ENCODE measurements at regions of chr7 and their contacts with region 1.

Region 1: GRCh38 chr7:121547544-121548092 is 151.5 kb upstream of the FAM3C start:
- DNase-seq: peak; percentile 76
- ATAC-seq: peak; percentile 47
- H3K4me3 ChIP-seq: no peak overlapping the region
- H3K27ac ChIP-seq: no peak overlapping the region
- H3K4me1 ChIP-seq: peaks cover 36% of the 10 kb centered on the region
- H3K27me3 ChIP-seq: no peaks in the 10 kb centered on the region
- CTCF ChIP-seq: peak; percentile 82

Region 2: DNA sequence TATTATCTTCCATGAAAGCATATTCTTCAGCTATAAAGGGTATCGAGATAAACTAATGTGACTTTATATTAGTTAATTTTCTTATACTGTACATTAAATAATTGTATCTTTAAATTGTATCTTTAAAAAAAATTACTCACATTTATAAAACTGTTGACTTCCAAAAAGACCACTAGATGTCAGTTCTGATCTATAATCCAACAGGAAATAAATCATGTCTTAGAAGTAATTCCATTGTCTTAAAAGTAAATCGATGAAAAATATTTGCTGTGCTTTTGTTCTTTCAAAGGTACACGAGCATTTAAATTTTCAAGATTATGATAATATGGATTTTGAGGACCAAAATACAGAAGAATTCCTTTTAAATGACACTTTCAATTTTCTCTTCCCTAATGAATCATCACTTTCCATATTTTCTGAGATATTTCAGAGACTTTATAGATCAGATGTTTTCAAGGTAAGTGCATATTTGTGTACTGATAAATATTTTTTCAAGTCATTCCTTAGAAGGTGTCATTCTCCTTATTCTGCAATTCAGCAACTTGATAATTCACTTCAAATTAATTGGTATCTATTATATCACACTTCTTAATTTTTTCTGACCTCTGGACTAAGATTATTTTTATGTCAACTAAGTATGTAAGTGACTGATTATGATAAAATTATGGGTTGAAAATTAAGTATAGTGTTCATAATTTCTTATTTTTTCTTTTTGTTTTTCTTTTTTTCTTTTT is 420.6 kb before region 1 on chr7:
- CTCF ChIA-PET with region 1: no interaction called
- POLR2A ChIA-PET with region 1: no interaction called
- intact Hi-C with region 1: loop called (anchors 5 kb)
- DNase-seq: peak; percentile 32
- ATAC-seq: no peak
- H3K4me3 ChIP-seq: no peak overlapping the region
- H3K27ac ChIP-seq: no peak overlapping the region
- H3K4me1 ChIP-seq: no peaks in the 10 kb centered on the region
- H3K27me3 ChIP-seq: no peaks in the 10 kb centered on the region
- CTCF ChIP-seq: peak; percentile 57

Region 3: DNA sequence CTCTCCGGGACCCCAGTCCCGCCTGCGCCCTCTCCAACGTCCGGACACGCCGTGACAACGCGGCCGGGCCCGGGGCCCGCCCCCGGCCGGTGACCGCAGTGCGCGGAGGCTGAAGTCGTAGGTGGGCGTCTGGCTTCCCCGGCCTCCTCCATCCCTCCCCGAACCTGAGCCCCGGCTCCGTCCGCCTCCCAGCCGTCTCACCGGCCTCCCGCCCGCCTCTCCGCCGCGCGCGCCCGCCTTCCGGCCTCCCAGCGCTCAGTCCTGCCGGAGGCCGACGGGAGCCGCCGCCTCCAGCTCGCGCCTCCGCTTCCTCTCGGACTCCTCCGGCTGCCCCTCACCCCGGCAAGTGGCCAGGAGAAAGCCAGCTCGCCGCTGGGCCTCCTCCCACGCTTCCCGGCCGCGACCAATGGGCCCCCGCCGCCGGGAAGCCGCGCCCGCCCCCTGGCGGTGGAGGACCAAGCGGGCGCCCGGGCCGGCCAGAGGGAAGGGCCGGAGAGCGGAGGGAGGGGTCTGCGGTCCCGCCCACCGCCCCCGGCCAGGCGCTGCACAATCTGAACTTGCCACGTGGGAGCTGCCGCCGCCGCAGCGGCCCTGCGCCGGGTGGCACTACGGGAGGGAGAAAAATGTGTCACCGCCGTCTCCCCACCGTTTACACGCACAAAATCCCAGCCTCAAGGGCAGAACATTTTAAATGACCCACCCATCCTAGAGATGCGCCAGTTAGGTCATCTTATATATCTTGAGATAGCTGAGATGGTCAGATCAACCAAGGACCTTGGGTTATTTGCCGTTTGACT is 151.5 kb before region 1 on chr7 and contains the start of gene FAM3C:
- CTCF ChIA-PET with region 1: interaction called, 7 read pairs
- POLR2A ChIA-PET with region 1: interaction called, 19 read pairs
- intact Hi-C with region 1: loop called (anchors 1 kb)
- DNase-seq: peak; percentile 93
- ATAC-seq: peak; percentile 93
- H3K4me3 ChIP-seq: peak within 1 kb of the TSS; percentile 80
- H3K27ac ChIP-seq: peak within 1 kb of the TSS; percentile 60
- H3K4me1 ChIP-seq: peaks cover 14% of the 10 kb centered on the region
- H3K27me3 ChIP-seq: no peaks in the 10 kb centered on the region
- CTCF ChIP-seq: peak; percentile 71
- total RNA-seq, gene FAM3C: 37.7 and 37.9 TPM in 2 replicates

Region 4: DNA sequence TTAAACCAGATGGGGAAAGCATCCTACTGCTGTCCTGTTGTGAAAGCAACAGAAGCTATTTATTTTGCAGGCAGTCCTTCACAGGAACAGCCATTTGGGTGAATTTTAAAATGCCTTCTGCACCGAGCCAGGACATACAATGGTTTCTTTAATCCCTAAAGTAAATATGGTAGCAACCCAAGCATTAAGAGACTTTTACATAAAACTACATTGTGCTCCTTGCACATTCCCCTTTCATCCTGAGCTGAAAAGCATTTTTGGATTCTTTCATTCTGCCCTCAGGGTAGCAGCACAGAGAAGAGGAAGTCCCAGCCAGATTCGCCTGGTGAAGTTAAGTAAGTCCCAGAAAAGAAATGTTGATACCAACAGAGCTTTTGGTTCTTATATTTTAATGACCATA is 67.6 kb before region 1 on chr7:
- CTCF ChIA-PET with region 1: no interaction called
- POLR2A ChIA-PET with region 1: no interaction called
- intact Hi-C with region 1: loop called (anchors 2 kb)
- DNase-seq: peak; percentile 50
- ATAC-seq: peak; percentile 93
- H3K4me3 ChIP-seq: no peak overlapping the region
- H3K27ac ChIP-seq: peak overlapping the region; percentile 6; the same call in 1 of the 2 replicates
- H3K4me1 ChIP-seq: peaks cover 12% of the 10 kb centered on the region
- H3K27me3 ChIP-seq: no peaks in the 10 kb centered on the region
- CTCF ChIP-seq: no peak

Region 5: GRCh38 chr7:121504478-121504877 is 43.1 kb before region 1 on chr7:
- CTCF ChIA-PET with region 1: no interaction called
- POLR2A ChIA-PET with region 1: no interaction called
- intact Hi-C with region 1: loop called (anchors 1 kb)
- DNase-seq: peak; percentile 76
- ATAC-seq: peak; percentile 95
- H3K4me3 ChIP-seq: 0 out of 2 replicates have a peak overlapping the region, but pooled peaks have one; percentile 7
- H3K27ac ChIP-seq: peak overlapping the region; percentile 14
- H3K4me1 ChIP-seq: 0 out of 2 replicates have a peak, but pooled peaks cover 6% of the 10 kb centered on the region
- H3K27me3 ChIP-seq: no peaks in the 10 kb centered on the region
- CTCF ChIP-seq: no peak

Region 6: DNA sequence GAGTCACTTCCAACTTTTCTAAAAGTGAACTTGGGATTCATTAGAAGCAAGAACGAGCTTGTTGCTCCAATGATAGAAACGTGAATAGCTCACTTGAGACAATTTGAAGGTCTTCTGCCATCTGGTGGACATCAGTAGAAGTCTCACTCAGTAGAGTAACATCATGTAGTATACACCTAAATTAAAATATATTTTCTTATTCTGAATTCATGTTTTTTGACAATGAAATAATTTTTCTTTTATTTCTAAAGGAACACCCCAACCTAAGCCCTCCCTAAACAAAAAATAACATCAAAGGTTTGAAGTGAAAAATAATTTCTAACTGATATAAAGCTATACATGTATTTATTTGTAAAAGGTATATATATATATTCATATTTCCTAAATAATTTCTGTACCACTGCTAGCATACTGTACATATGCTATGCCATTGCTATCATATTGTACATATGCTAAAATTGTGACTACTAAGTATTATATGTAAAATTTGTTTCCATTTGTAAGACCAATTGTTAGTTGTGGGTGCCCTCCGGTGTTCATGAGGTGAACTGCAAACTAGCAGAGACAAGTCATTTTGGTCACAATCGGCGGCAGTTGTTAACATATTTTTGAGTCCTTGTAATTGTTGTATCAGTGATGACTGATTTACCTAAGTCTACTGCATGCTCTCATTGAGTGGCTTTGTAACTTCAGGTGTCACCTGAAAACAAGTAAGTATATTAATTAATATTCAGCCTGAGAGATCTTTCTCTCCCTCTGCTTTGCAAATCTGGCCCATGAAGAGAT is 447.2 kb after region 1 on chr7:
- CTCF ChIA-PET with region 1: interaction called, 5 read pairs
- POLR2A ChIA-PET with region 1: no interaction called
- intact Hi-C with region 1: loop called (anchors 5 kb)
- DNase-seq: peak; percentile 78
- ATAC-seq: peak; percentile 96
- H3K4me3 ChIP-seq: no peak overlapping the region
- H3K27ac ChIP-seq: no peak overlapping the region
- H3K4me1 ChIP-seq: no peaks in the 10 kb centered on the region
- H3K27me3 ChIP-seq: 0 out of 2 replicates have a peak, but pooled peaks cover 4% of the 10 kb centered on the region
- CTCF ChIP-seq: peak; percentile 72

Measured in PC-3 (cell line).